H1 (cell line): ENCODE measurements at regions of chr11 and their contacts with region 1.

Region 1: DNA sequence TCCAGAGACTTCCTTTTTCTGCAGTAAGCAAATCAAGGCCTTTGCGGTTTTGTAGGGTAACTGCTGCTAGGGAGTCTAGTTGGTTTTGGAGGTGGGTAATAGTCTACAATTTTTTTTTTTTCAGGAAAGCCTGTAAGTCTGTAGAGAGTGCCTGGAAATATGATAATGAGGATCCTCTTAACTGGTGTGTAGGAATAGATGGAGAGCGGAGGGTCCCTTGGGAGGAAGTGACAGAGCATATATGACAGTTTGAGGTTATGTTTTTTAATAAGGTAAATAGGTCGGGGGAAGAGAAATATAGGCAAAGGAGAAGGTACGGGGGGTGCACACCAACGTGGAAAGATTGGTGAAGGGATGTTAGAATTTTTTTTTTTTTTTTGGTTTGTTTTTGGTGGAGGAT is 25.9 kb downstream of the ZNF195 start:
- DNase-seq: no peak
- H3K4me3 ChIP-seq: no peak overlapping the region
- H3K27ac ChIP-seq: no peak overlapping the region
- H3K4me1 ChIP-seq: no peaks in the 10 kb centered on the region
- H3K27me3 ChIP-seq: no peaks in the 10 kb centered on the region
- CTCF ChIP-seq: no peak
- EP300 ChIP-seq: no peak
- POLR2A ChIP-seq: no peak
- RAD21 ChIP-seq: no peak

Region 2: DNA sequence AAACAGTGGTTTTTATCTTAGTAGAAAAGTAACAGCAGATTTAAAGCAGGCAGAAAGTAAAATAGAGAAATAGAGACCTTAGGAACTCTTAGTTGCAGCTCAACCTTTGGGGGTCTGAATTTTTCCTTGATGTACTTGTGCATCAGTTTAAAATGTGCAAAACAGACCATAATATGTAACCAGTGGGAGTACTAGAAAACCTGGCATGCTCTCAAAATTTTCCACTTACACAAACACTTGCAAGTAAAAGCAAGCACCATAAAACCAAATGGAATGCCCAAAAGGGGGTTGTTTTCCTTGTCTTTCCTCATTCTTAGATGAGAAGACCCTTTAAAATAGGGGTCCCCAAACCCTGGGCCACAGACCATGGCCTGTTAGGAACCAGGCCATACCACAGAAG is 108.0 kb before region 1 on chr11:
- CTCF ChIA-PET with region 1: no interaction called
- POLR2A ChIA-PET with region 1: no interaction called
- DNase-seq: no peak
- H3K4me3 ChIP-seq: no peak overlapping the region
- H3K27ac ChIP-seq: no peak overlapping the region
- H3K4me1 ChIP-seq: peaks cover 0 to 4% (median 0%) of the 10 kb centered on the region in 4 experiments; a peak in 1 of 7 replicates
- H3K27me3 ChIP-seq: no peaks in the 10 kb centered on the region
- CTCF ChIP-seq: no peak
- EP300 ChIP-seq: no peak
- POLR2A ChIP-seq: no peak
- RAD21 ChIP-seq: no peak

Region 3: GRCh38 chr11:3370311-3370870 is 17.3 kb after region 1 on chr11:
- CTCF ChIA-PET with region 1: interaction called, 5 read pairs
- POLR2A ChIA-PET with region 1: interaction called, 117 read pairs
- DNase-seq: no peak
- H3K4me3 ChIP-seq: no peak overlapping the region
- H3K27ac ChIP-seq: no peak overlapping the region
- H3K4me1 ChIP-seq: peaks cover 0 to 2% (median under 1%) of the 10 kb centered on the region in 4 experiments; a peak in 3 of 7 replicates
- H3K27me3 ChIP-seq: peaks cover 0 to 1% (median 0%) of the 10 kb centered on the region in 4 experiments; a peak in 1 of 7 replicates
- CTCF ChIP-seq: no peak
- EP300 ChIP-seq: no peak
- POLR2A ChIP-seq: no peak
- RAD21 ChIP-seq: no peak